Activated CD8-positive, alpha-beta T cell treated with anti-CD3 and anti-CD28 coated beads for 36 hours (primary cell): ENCODE measurements at regions of chr10 and their contacts with region 1.

Region 1: GRCh38 chr10:109883859-109884771 is 39.2 kb downstream of the XPNPEP1 start:
- DNase-seq: peak; percentile 51
- ATAC-seq: peak; percentile 80
- H3K4me3 Mint-ChIP-seq: no peak overlapping the region
- H3K27ac Mint-ChIP-seq: no peak overlapping the region
- H3K4me1 Mint-ChIP-seq: peaks cover 32% of the 10 kb centered on the region
- H3K27me3 Mint-ChIP-seq: no peaks in the 10 kb centered on the region
- CTCF ChIP-seq: peak; percentile 95

Region 2: GRCh38 chr10:109676703-109677102 is 207.4 kb before region 1 on chr10:
- CTCF ChIA-PET with region 1: no interaction called
- POLR2A ChIA-PET with region 1: no interaction called
- intact Hi-C with region 1: no loop called
- DNase-seq: no peak
- ATAC-seq: no peak
- H3K4me3 Mint-ChIP-seq: no peak overlapping the region
- H3K27ac Mint-ChIP-seq: no peak overlapping the region
- H3K4me1 Mint-ChIP-seq: no peaks in the 10 kb centered on the region
- H3K27me3 Mint-ChIP-seq: no peaks in the 10 kb centered on the region
- CTCF ChIP-seq: no peak

Region 3: GRCh38 chr10:109696981-109697775 is 186.9 kb before region 1 on chr10:
- CTCF ChIA-PET with region 1: no interaction called
- POLR2A ChIA-PET with region 1: no interaction called
- intact Hi-C with region 1: no loop called
- DNase-seq: no peak
- ATAC-seq: no peak
- H3K4me3 Mint-ChIP-seq: no peak overlapping the region
- H3K27ac Mint-ChIP-seq: no peak overlapping the region
- H3K4me1 Mint-ChIP-seq: no peaks in the 10 kb centered on the region
- H3K27me3 Mint-ChIP-seq: no peaks in the 10 kb centered on the region
- CTCF ChIP-seq: no peak

Region 4: DNA sequence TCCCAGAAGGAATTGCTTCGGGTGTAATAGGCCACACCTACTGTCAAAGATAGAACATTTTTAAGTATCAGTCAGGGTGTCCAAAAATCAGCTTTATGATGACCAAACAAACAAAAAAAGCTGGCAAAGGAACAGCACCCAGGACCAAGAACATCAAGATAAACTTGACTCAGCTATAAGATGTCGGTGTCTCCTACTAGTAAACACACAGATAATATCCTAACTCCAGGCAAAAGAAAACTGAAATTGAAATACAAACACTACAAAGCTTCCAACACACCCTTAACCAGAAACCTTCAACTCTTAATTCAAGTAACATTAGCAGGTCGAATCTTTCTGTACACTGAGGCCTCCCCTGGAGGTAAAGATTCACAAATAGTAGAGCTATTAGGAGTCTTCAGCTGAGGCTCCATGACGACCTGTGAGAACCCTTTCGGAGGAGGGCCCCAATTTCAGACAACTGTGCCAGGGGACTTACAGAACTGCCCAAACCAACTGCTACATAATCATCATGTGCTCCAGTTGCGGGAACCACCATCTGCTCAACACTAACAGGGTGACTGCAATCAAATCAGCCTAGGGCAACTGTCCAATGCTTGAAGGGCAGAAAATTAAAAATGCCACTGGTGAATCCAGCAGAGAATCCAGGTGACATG is 18.9 kb after region 1 on chr10:
- CTCF ChIA-PET with region 1: interaction called, 15 read pairs
- POLR2A ChIA-PET with region 1: interaction called, 3 read pairs
- intact Hi-C with region 1: no loop called
- DNase-seq: peak; percentile 29
- ATAC-seq: peak; percentile 77
- H3K4me3 Mint-ChIP-seq: peak overlapping the region; percentile 28
- H3K27ac Mint-ChIP-seq: peak overlapping the region; percentile 76
- H3K4me1 Mint-ChIP-seq: peaks cover 51% of the 10 kb centered on the region
- H3K27me3 Mint-ChIP-seq: no peaks in the 10 kb centered on the region
- CTCF ChIP-seq: no peak

Region 5: DNA sequence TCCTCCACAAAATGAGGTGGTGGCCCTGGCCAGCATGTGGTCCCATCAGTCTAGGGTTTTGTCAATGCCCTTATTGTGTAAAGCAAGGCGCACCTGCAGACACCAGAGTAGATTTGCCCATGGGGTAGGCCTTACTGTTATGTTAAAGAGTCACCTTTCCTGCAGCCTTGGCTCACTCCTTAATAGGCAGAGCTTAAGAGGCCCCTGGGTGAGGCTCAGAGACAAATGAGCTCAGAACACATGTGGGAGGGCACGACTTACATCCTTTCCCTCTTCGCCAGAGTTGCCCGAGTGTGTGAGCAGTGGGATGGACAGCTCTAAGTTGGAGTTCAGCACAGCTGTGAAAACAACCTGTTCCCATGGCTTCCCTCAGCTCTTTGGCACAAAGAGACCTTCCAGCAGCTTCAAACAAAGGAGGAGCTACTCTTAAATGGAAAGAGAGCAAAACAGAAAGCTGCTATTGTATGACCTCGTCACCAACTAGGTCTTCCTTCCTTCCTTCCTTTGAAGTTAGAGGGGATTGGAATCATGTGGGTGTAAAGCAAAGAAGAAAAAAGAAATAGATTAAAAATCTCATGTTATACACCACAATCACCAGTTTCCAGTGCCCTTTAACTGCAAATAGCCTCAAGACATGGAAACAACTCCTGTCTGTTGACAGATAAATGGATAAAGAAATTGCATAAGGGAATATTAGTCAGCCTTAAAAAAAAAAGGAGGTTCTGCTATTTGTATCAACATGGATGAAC is 51.0 kb after region 1 on chr10:
- CTCF ChIA-PET with region 1: interaction called, 20 read pairs
- POLR2A ChIA-PET with region 1: interaction called, 4 read pairs
- intact Hi-C with region 1: no loop called
- DNase-seq: peak; percentile 44
- ATAC-seq: peak; percentile 68
- H3K4me3 Mint-ChIP-seq: peak overlapping the region; percentile 78
- H3K27ac Mint-ChIP-seq: peak overlapping the region; percentile 98
- H3K4me1 Mint-ChIP-seq: peaks cover 62% of the 10 kb centered on the region
- H3K27me3 Mint-ChIP-seq: no peaks in the 10 kb centered on the region
- CTCF ChIP-seq: no peak

Region 6: DNA sequence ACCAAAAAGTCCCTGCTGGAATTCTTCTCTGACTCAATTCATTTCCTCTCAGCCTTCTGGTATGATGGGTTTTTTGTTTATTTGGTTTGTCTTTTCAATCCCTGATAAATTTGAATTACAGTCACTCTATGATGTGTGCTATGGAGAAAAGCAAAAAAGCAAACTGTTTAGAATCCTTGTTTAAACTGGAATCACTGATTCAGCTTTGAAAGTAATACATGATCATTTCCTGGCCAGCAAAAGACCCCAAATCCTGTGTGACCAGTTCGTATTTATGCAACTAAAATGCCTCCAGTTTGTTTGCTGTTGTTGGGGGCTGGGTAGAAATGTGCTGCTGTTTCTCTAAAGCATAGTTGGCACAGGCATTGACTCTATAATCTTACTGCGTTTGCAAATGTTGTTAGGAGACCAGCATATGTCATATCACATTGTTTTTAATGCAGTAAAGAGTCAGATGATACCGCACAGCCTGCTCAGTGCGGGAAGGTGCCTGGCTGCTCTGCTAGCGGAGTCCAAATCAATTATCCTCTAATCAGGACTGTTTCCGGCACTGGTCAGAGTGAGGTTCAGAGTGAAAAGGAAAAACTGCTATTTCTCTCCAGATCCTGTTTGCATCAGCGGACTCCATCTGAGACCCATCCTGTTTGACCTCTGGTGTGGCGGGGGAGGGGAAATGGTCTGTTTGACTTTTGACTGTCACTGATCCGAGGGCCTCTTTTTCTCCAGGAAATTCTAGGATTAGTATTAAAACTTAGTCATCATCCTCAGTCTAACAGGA is 83.0 kb after region 1 on chr10:
- CTCF ChIA-PET with region 1: interaction called, 11 read pairs
- POLR2A ChIA-PET with region 1: no interaction called
- intact Hi-C with region 1: no loop called
- DNase-seq: no peak
- ATAC-seq: no peak
- H3K4me3 Mint-ChIP-seq: no peak overlapping the region
- H3K27ac Mint-ChIP-seq: no peak overlapping the region
- H3K4me1 Mint-ChIP-seq: peaks cover 3% of the 10 kb centered on the region
- H3K27me3 Mint-ChIP-seq: peaks cover 2% of the 10 kb centered on the region
- CTCF ChIP-seq: no peak

Region 7: DNA sequence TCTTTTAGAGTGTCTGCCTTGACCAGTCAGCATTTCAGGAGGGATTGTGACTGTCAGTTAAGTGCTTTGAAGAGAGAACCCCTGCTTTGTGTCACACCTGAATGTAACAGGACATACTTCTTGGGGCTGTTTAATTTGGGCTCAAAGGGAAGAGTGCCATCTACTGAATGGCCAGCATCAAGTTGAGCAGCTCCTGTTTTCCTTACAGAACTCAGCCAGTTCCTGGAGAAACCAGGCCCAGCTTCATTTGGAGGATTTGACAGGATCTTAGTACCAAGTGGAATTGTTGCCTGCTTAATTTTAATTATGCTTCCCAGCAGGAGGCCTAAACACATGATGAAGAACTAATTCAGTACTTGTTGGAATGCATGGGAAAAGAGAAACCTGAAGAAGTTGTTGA is 131.9 kb after region 1 on chr10:
- CTCF ChIA-PET with region 1: interaction called, 10 read pairs
- POLR2A ChIA-PET with region 1: no interaction called
- intact Hi-C with region 1: loop called (anchors 10 kb)
- DNase-seq: no peak
- ATAC-seq: no peak
- H3K4me3 Mint-ChIP-seq: no peak overlapping the region
- H3K27ac Mint-ChIP-seq: peak overlapping the region; percentile 79
- H3K4me1 Mint-ChIP-seq: peaks cover 70% of the 10 kb centered on the region
- H3K27me3 Mint-ChIP-seq: no peaks in the 10 kb centered on the region
- CTCF ChIP-seq: no peak

Region 8: DNA sequence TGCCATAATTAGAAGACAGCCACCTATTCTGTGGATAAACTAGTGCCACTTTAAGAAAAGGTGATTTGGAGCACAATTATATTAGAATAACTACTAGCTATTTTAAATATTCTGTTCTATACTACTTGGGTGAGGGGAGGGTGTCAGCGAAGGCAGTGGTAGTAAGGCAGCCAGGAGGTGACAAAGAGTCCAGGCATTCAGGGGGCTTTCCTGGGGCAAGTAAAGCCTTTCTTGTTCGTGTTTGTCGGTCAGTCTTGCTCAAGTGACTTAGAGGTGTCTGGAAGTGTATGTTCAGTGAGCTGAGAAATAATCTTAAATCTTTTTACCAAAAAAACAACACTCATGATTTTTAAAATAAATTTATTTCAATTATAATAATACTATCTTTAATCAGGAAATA is 158.1 kb after region 1 on chr10:
- CTCF ChIA-PET with region 1: no interaction called
- POLR2A ChIA-PET with region 1: no interaction called
- intact Hi-C with region 1: no loop called
- DNase-seq: no peak
- ATAC-seq: no peak
- H3K4me3 Mint-ChIP-seq: no peak overlapping the region
- H3K27ac Mint-ChIP-seq: no peak overlapping the region
- H3K4me1 Mint-ChIP-seq: peaks cover 63% of the 10 kb centered on the region
- H3K27me3 Mint-ChIP-seq: no peaks in the 10 kb centered on the region
- CTCF ChIP-seq: no peak

Region 9: DNA sequence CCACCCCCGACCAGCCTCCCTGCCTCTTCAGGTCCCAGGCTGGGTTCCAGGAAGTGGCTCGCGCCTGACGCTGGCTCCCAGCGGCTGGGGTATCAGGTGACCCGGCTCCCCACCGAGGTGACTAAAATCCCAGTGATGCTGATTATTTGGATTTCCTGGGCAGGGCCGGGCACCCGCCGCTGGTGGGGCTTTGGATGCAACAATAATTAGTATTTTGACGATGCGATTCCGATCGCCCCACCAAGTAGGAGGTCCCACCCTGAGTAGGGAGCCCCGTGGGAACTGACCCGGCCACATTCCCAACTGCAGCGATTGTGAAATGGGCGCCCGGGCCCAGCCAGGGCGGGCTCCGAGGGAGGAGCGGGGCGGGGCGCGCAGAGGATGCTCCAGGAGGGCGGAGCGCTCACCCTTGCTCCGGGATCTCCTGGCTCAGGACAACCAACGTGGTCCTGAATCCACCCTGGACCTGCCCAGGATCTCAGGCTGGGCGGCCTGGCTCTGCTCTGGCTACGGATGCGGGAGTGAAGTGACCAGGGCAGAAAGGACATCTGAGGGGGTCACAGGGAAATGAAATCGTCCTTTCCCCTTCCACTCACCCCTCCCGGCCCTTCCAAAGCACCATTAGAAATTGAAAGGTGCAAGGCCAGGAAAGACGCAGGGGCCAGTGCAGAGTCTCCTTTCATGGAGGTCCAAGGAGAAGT is 646.2 kb after region 1 on chr10:
- CTCF ChIA-PET with region 1: no interaction called
- POLR2A ChIA-PET with region 1: no interaction called
- intact Hi-C with region 1: no loop called
- DNase-seq: peak; percentile 29
- ATAC-seq: no peak
- H3K4me3 Mint-ChIP-seq: no peak overlapping the region
- H3K27ac Mint-ChIP-seq: no peak overlapping the region
- H3K4me1 Mint-ChIP-seq: peaks cover 65% of the 10 kb centered on the region
- H3K27me3 Mint-ChIP-seq: no peaks in the 10 kb centered on the region
- CTCF ChIP-seq: no peak